ENCODE measurements at regions of chr13 and their contacts with region 1.

Region 1: GRCh38 chr13:98509271-98510155 is 67.4 kb downstream of the STK24 start:
- DNase-seq: peak; percentile 79
- ATAC-seq: peak; percentile 67
- H3K4me3 ChIP-seq: no peak overlapping the region
- H3K27ac ChIP-seq: peak overlapping the region; percentile 72
- H3K4me1 ChIP-seq: peaks cover 80% of the 10 kb centered on the region
- H3K27me3 ChIP-seq: no peaks in the 10 kb centered on the region
- CTCF ChIP-seq: no peak
- EP300 ChIP-seq: peak; percentile 49 to 72; a peak in 2 of 4 replicates
- POLR2A ChIP-seq: no peak
- RAD21 ChIP-seq: no peak

Region 2: DNA sequence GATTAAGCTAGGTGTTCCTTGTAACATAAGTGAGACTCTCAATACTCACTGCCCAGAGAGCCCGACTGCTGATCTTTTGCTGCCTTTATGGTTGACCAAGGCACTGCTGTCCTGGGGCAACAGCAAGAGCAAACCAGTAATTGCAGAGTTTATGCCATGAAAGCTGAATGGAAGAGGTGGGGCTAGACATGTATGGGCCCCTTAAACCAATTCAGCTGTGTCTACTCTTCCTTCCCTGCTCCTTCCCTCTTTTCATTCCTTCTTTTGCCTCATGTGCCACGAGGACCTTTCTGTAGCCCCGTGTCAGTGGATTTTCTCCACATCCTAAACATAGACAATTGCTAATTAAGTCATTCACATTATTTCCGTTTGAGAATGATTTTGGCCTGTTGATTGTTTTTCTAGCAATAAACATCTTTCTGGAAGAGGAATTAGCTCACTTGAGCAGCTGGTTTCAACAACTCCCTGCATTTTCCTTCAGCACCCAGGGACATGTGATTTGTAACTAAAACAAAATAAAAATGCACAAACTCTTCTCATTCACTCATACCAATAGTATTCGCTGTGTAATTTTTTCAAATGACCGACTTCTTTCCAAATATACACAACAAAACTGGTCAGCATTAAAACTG is 1035.0 kb before region 1 on chr13:
- CTCF ChIA-PET with region 1: no interaction called
- POLR2A ChIA-PET with region 1: no interaction called
- RAD21 ChIA-PET with region 1: no interaction called
- SMC1A ChIA-PET with region 1: no interaction called
- in situ Hi-C with region 1: no loop called
- intact Hi-C with region 1: no loop called
- DNase-seq: no peak
- ATAC-seq: no peak
- H3K4me3 ChIP-seq: no peak overlapping the region
- H3K27ac ChIP-seq: no peak overlapping the region
- H3K4me1 ChIP-seq: no peaks in the 10 kb centered on the region
- H3K27me3 ChIP-seq: no peaks in the 10 kb centered on the region
- CTCF ChIP-seq: no peak
- EP300 ChIP-seq: no peak
- POLR2A ChIP-seq: no peak
- RAD21 ChIP-seq: no peak

Region 3: GRCh38 chr13:98445340-98446233 is 63.9 kb before region 1 on chr13:
- CTCF ChIA-PET with region 1: interaction called, 3 read pairs
- POLR2A ChIA-PET with region 1: interaction called, 5 read pairs
- RAD21 ChIA-PET with region 1: interaction called, 4 read pairs
- SMC1A ChIA-PET with region 1: interaction called, 10 read pairs
- in situ Hi-C with region 1: no loop called
- intact Hi-C with region 1: no loop called
- DNase-seq: peak; percentile 17
- ATAC-seq: peak; percentile 97
- H3K4me3 ChIP-seq: no peak overlapping the region
- H3K27ac ChIP-seq: peak overlapping the region; percentile 53
- H3K4me1 ChIP-seq: peaks cover 6% of the 10 kb centered on the region
- H3K27me3 ChIP-seq: no peaks in the 10 kb centered on the region
- CTCF ChIP-seq: peak; percentile 90 to 100 (median 98); a peak in 5 of 6 replicates
- EP300 ChIP-seq: no peak
- POLR2A ChIP-seq: no peak; the same call in 1 of the 2 replicates
- RAD21 ChIP-seq: peak; percentile 93

Region 4: GRCh38 chr13:98476538-98476966 is 33.0 kb before region 1 on chr13:
- CTCF ChIA-PET with region 1: interaction called, 8 read pairs
- POLR2A ChIA-PET with region 1: interaction called, 5 read pairs
- RAD21 ChIA-PET with region 1: interaction called, 37 read pairs
- SMC1A ChIA-PET with region 1: interaction called, 39 read pairs
- in situ Hi-C with region 1: no loop called
- intact Hi-C with region 1: loop called (anchors 1 kb)
- DNase-seq: peak; percentile 90
- ATAC-seq: peak; percentile 94
- H3K4me3 ChIP-seq: peak overlapping the region; percentile 13; the same call in 1 of the 2 replicates
- H3K27ac ChIP-seq: peak overlapping the region; percentile 67
- H3K4me1 ChIP-seq: peaks cover 44% of the 10 kb centered on the region
- H3K27me3 ChIP-seq: no peaks in the 10 kb centered on the region
- CTCF ChIP-seq: no peak
- EP300 ChIP-seq: peak; percentile 96 to 97
- POLR2A ChIP-seq: peak; percentile 70
- RAD21 ChIP-seq: 0 out of 2 replicates have a peak, but pooled peaks have one; percentile 1

Region 5: DNA sequence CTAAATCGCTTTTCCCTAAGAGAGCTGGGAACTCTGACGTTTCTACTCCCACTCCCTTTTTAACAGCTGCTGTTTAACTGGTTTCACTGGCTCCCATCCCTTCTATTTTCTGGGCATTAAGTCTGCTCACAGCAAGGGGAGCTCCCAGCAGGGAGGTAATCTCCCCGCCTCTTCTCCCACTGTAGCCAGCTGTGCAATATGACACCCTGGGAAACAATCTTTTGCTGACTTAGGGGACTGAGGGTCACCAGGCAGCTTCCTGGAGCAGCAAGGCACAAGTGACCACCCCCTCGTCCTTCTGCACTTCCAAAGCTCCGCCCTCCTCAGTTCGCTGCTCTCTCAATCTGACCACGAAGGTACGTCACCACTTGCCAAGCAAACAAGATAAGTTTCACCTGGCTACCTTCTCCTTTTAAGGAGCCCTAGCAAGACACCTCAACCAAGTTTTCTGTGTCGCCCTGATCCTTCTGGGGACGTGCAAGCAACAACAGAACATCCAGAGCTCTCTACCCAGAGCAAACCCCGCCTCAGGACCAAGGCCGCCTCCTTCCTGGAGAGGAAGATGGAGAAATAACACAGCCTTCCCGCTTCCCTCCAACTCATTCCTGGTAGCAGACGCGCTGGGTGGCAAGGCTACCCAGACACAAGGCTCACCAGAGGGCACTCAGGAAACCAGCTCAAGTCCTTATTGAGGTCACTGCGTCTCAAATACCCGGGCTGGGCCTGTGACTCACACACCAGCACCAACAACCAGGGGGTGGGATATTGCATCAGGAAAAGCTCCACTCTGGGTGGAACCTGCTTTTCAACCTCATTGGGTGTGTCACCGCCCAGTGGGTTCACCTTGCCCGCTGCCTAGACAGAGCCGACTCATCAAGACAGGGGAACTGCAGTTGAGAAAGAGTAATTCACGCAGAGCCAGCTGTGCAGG is 25.0 kb before region 1 on chr13:
- CTCF ChIA-PET with region 1: interaction called, 8 read pairs
- POLR2A ChIA-PET with region 1: interaction called, 5 read pairs
- RAD21 ChIA-PET with region 1: interaction called, 37 read pairs
- SMC1A ChIA-PET with region 1: interaction called, 39 read pairs
- in situ Hi-C with region 1: no loop called
- intact Hi-C with region 1: no loop called
- DNase-seq: no peak
- ATAC-seq: peak; percentile 70
- H3K4me3 ChIP-seq: no peak overlapping the region
- H3K27ac ChIP-seq: peak overlapping the region; percentile 79
- H3K4me1 ChIP-seq: peaks cover 81% of the 10 kb centered on the region
- H3K27me3 ChIP-seq: no peaks in the 10 kb centered on the region
- CTCF ChIP-seq: no peak
- EP300 ChIP-seq: no peak
- POLR2A ChIP-seq: no peak
- RAD21 ChIP-seq: no peak

Region 6: DNA sequence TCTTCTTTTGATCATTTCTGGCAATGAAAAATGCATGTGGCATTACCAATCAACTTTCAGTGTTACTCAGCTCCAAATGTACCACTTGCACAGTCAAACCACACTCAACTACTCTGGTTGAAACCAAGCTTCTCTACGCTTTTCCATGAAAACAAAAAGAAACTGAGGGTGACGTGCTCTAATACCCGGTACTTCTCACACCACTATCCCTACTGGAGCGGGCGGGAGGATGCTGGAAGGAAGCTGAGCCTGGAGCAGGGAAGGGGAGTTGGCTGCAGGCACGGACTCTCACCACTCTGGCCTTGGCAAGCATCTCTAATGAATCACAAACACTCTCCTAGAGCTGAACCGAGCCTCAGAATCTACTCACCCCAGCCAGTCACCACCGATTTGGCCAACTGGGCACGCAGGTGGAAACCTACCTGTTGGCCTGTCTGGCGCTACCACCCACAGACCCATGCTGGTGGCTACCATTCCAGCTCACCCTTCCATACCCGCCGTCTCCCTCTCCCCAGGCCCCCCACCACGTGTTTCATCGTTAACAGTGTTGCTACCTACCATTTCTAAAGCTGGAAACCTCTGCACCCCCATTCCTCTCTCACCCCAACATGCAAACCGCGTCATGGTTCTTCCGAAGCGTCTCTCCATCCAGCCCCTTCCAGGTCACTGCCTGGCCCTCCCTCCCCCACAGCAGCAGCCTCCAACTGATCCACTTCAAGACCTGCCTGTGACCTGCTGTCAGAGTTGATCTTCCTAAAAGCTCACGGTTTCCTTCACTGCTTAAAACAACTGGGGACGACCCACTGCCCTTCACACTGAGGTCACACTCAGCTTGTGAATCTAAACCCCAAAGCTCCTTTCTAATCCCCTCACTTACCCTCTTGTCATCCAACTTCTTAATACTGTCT is 19.4 kb after region 1 on chr13:
- CTCF ChIA-PET with region 1: interaction called, 11 read pairs
- POLR2A ChIA-PET with region 1: interaction called, 5 read pairs
- RAD21 ChIA-PET with region 1: interaction called, 9 read pairs
- SMC1A ChIA-PET with region 1: interaction called, 22 read pairs
- in situ Hi-C with region 1: no loop called
- intact Hi-C with region 1: no loop called
- DNase-seq: no peak
- ATAC-seq: peak; percentile 23
- H3K4me3 ChIP-seq: no peak overlapping the region
- H3K27ac ChIP-seq: peak overlapping the region; percentile 16; the same call in 1 of the 2 replicates
- H3K4me1 ChIP-seq: peaks cover 56% of the 10 kb centered on the region
- H3K27me3 ChIP-seq: no peaks in the 10 kb centered on the region
- CTCF ChIP-seq: no peak
- EP300 ChIP-seq: no peak
- POLR2A ChIP-seq: no peak
- RAD21 ChIP-seq: no peak

Region 7: DNA sequence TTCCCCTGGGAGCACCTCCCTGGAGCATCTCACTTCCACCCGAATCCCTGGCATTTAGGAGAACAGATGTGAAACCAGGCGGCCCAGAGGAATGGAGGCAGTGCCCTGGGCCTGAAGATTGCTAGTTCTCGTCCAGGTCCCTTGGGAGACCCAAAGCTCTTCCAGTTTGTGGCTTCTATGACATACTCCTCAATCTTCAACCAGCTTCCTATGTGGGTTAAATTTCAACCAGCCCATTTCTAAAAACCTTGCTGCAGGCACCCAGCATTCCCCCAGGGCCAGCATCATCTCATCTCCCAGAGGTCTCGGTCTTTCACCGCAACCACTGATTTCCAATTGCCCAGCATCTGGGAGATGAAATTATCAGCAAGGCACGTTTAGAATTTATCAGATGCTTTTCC is 113.4 kb after region 1 on chr13:
- CTCF ChIA-PET with region 1: no interaction called
- POLR2A ChIA-PET with region 1: no interaction called
- RAD21 ChIA-PET with region 1: no interaction called
- SMC1A ChIA-PET with region 1: no interaction called
- in situ Hi-C with region 1: no loop called
- intact Hi-C with region 1: no loop called
- DNase-seq: no peak
- ATAC-seq: no peak
- H3K4me3 ChIP-seq: no peak overlapping the region
- H3K27ac ChIP-seq: no peak overlapping the region
- H3K4me1 ChIP-seq: no peaks in the 10 kb centered on the region
- H3K27me3 ChIP-seq: no peaks in the 10 kb centered on the region; a peak in 1 of 4 replicates
- CTCF ChIP-seq: no peak
- EP300 ChIP-seq: no peak
- POLR2A ChIP-seq: no peak
- RAD21 ChIP-seq: no peak

Measured in GM12878 (cell line).